ENCODE measurements at regions of chr10 and their contacts with region 1.

Region 1: GRCh38 chr10:129063877-129064276 is 403.2 kb upstream of the MGMT start:
- DNase-seq: no peak
- H3K4me3 ChIP-seq: no peak overlapping the region
- H3K27ac ChIP-seq: no peak overlapping the region
- H3K4me1 ChIP-seq: no peaks in the 10 kb centered on the region
- CTCF ChIP-seq: no peak

Region 2: DNA sequence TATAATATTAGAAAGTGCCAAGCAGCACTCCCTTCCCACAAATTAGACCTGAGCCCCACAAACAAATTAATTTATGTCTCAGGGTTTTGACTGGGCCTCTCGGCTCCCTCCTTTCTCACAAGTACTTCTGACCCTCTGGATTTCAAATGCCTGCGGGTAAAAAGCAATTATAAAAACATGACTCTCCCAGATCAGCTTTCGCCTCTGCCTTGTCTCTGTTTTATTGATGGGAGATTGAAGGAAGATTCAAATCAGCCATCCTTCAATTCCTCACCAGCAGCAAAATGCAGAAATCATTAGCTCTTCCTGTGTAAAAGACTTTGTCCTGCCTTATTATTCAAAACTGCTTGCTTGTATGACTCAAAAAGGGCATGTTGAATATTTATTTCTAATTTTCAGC is 484.0 kb before region 1 on chr10:
- CTCF ChIA-PET with region 1: no interaction called
- POLR2A ChIA-PET with region 1: no interaction called
- intact Hi-C with region 1: loop called (anchors 10 kb)
- DNase-seq: no peak
- H3K4me3 ChIP-seq: no peak overlapping the region
- H3K27ac ChIP-seq: no peak overlapping the region
- H3K4me1 ChIP-seq: no peaks in the 10 kb centered on the region
- CTCF ChIP-seq: no peak

Region 3: GRCh38 chr10:129046065-129046681 is 17.7 kb before region 1 on chr10:
- CTCF ChIA-PET with region 1: no interaction called
- POLR2A ChIA-PET with region 1: no interaction called
- intact Hi-C with region 1: no loop called
- DNase-seq: no peak
- H3K4me3 ChIP-seq: no peak overlapping the region
- H3K27ac ChIP-seq: no peak overlapping the region
- H3K4me1 ChIP-seq: no peaks in the 10 kb centered on the region
- CTCF ChIP-seq: no peak

Measured in OCI-LY7 (cell line).